Heart right ventricle (tissue), 16 donors: ENCODE measurements at regions of chr2 and their contacts with region 1.

Region 1: GRCh38 chr2:25252281-25253105 is 84.1 kb upstream of the POMC start:
- DNase-seq: peak; percentile 66 to 72
- ATAC-seq: peak; percentile 61 to 83 (median 74)
- H3K4me3 ChIP-seq: peak overlapping the region; percentile 22 to 71 (median 64)
- H3K27ac ChIP-seq: peak overlapping the region; percentile 18 to 90 (median 86)
- H3K4me1 ChIP-seq: peaks cover 16 to 40% (median 31%) of the 10 kb centered on the region in 9 donors
- H3K27me3 ChIP-seq: no peaks in the 10 kb centered on the region
- CTCF ChIP-seq: no peak

Region 2: DNA sequence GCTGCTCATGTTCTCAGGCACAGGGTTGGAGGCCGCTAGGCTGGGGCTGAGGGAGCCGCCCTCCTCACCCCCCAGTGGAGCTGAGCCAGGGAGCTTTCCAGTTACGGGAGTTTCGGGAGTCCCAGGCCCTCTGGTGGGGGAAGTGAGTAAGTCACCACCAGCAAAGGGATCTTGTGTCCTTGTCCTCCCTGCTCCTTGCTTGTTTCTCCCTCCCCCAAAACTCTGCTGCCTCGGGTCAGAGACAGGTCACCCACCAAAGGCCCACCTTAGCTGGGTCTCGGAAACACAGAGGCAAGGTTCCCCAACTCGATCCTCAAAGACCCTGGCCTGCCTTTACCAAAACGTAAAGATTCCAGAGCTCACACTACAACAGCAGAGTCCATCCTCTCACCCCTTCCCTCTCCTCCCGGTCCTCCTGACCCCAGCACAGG is 23.6 kb before region 1 on chr2:
- intact Hi-C with region 1: no loop called
- DNase-seq: peak; percentile 74 to 81
- ATAC-seq: peak; percentile 74 to 91 (median 86)
- H3K4me3 ChIP-seq: no peak overlapping the region
- H3K27ac ChIP-seq: peak overlapping the region in 8 of 10 donors; percentile 10 to 58 (median 46)
- H3K4me1 ChIP-seq: peaks cover 6 to 30% (median 24%) of the 10 kb centered on the region in 9 donors
- H3K27me3 ChIP-seq: no peaks in the 10 kb centered on the region
- CTCF ChIP-seq: peak; percentile 47 to 80 (median 72)

Region 3: DNA sequence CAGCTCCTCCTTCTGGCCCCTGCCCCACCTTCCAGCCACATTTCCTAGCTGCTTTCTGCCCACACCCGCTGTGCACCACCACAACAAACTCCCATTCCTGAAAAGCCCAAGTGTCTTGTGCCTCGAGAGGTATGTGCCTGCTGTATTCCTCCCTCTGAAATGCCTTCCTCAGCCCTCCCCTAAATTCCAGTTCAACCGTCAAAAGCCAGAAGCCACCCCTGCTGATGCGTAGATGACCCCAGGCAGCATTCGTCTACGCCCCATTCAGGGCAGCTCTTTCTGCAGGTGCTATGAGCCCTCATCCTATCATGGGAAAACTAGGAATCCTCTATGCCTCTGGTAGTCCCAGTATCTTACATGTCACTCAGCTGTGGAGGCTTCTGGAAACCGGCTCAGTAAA is 17.6 kb after region 1 on chr2:
- intact Hi-C with region 1: loop called in 1 of 10 experiments (anchors 2 kb)
- DNase-seq: no peak
- ATAC-seq: no peak
- H3K4me3 ChIP-seq: no peak overlapping the region
- H3K27ac ChIP-seq: no peak overlapping the region
- H3K4me1 ChIP-seq: peaks cover 0 to 40% (median 22%) of the 10 kb centered on the region in 9 donors
- H3K27me3 ChIP-seq: no peaks in the 10 kb centered on the region
- CTCF ChIP-seq: no peak

Region 4: GRCh38 chr2:25420820-25421237 is 168.3 kb after region 1 on chr2:
- intact Hi-C with region 1: no loop called
- DNase-seq: no peak
- ATAC-seq: no peak
- H3K4me3 ChIP-seq: no peak overlapping the region
- H3K27ac ChIP-seq: peak overlapping the region in 1 of 10 donors; percentile 29
- H3K4me1 ChIP-seq: peaks cover 0 to 25% (median 0%) of the 10 kb centered on the region in 9 donors
- H3K27me3 ChIP-seq: no peaks in the 10 kb centered on the region
- CTCF ChIP-seq: no peak